Heart left ventricle (tissue), 16 donors: ENCODE measurements at regions of chr1 and their contacts with region 1.

Region 1: DNA sequence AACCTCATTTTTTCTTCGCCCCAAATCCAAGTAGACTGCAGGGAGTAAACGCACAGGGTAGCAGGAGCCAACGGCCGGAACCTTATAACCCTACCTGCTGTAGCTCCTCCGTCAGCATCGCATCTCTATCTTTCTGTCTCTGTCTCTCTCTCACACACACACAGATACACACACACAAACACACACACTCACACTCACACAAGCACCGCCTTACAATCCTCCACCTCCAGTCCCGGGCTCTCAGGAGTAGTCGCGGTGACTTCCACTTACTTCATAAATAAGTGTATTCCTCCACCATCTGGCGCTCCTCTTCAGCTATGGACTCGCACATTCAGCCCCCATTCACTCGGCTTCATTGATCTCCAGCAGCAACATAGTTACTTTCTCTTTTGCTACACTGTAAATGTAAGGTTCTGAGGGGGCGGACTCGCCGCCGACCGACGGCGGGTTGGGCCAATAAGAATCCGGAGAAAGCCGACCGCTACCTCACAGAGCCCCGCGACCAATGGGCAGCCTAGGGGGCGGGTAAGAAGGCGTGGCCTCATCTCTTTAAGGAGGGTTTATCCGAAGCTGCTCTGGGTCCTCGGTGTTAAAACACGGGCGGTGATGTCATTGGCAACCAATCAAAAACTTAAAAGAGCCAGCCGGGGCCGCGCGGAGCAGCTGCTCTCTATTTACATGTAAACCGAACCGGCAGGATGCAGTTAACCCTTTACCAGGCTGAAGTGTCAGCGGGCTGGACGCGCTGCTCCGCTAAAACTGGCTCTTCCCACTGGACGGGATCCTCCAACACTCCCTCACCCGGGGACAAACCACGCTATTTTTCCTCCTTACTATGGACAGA is at the start of gene DUSP10:
- DNase-seq: peak; percentile 98 to 99 (median 99)
- ATAC-seq: peak; percentile 95 to 98 (median 97)
- H3K4me3 ChIP-seq: peak within 1 kb of the TSS; percentile 49 to 90 (median 76)
- H3K27ac ChIP-seq: peak within 1 kb of the TSS; percentile 95 to 100 (median 98)
- H3K4me1 ChIP-seq: peaks cover 0 to 37% (median 9%) of the 10 kb centered on the region in 12 donors
- H3K27me3 ChIP-seq: no peaks in the 10 kb centered on the region
- CTCF ChIP-seq: no peak
- POLR2A ChIP-seq: peak in 1 of 2 donors; percentile 82
- total RNA-seq, gene DUSP10: 2.8 to 7.1 (median 4.4) TPM

Region 2: DNA sequence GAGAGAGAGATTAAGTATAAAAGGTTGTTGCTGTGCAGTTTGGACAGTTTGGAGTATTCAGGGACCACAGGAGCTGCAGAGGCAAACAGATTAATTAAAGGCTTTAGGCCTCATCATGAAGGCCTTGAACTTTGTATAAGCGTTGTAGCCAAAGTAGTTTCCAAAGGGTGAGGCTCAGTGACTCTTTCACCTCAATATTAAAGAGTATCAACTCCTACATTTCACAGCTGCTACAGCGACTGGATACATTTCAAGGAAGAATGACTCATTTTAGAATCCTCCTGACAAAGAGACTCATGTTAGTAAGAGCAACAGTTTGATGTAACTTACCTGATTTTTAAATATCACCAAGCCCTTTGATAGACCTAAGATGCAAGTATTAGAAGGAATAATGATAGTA is 507.1 kb before region 1 on chr1:
- intact Hi-C with region 1: no loop called
- DNase-seq: no peak
- ATAC-seq: no peak
- H3K4me3 ChIP-seq: no peak overlapping the region
- H3K27ac ChIP-seq: peak overlapping the region in 1 of 12 donors; percentile 27
- H3K4me1 ChIP-seq: peaks cover 0 to 16% (median 4%) of the 10 kb centered on the region in 12 donors
- H3K27me3 ChIP-seq: no peaks in the 10 kb centered on the region
- CTCF ChIP-seq: no peak
- POLR2A ChIP-seq: no peak

Region 3: GRCh38 chr1:221478050-221478949 is 263.6 kb before region 1 on chr1:
- intact Hi-C with region 1: loop called in 1 of 10 experiments (anchors 5 kb)
- DNase-seq: peak; percentile 21 to 61 (median 52)
- ATAC-seq: peak in 3 of 4 donors; percentile 72 to 93 (median 88)
- H3K4me3 ChIP-seq: no peak overlapping the region
- H3K27ac ChIP-seq: no peak overlapping the region
- H3K4me1 ChIP-seq: no peaks in the 10 kb centered on the region
- H3K27me3 ChIP-seq: peaks cover 0 to 13% (median 0%) of the 10 kb centered on the region in 9 donors
- CTCF ChIP-seq: peak in 11 of 12 donors; percentile 43 to 69 (median 55)
- POLR2A ChIP-seq: no peak

Region 4: DNA sequence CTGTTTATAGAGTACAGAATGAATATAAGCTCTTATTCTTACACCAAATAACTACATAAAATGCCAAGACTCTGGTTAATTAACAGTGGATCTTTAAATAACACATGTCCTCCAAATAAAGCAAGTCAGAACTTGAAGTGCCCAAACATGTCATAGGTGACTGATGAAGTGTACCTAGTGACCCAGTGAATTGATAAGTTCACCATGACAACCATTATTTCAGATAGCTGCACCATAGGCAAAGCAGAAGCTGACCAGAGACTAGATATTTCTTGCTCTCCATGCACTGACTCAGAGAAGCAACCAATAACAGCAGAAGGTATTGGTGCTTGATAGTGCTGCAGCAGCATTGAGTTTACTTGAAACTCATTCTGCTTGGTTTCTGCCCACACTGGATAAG is 192.1 kb before region 1 on chr1:
- intact Hi-C with region 1: loop called in 3 of 10 experiments (anchors 5 to 10 kb)
- DNase-seq: no peak
- ATAC-seq: no peak
- H3K4me3 ChIP-seq: no peak overlapping the region
- H3K27ac ChIP-seq: no peak overlapping the region
- H3K4me1 ChIP-seq: no peaks in the 10 kb centered on the region
- H3K27me3 ChIP-seq: no peaks in the 10 kb centered on the region
- CTCF ChIP-seq: no peak
- POLR2A ChIP-seq: no peak

Region 5: GRCh38 chr1:221567859-221568507 is 173.9 kb before region 1 on chr1:
- intact Hi-C with region 1: loop called in 1 of 10 experiments (anchors 10 kb)
- DNase-seq: no peak
- ATAC-seq: no peak
- H3K4me3 ChIP-seq: no peak overlapping the region
- H3K27ac ChIP-seq: no peak overlapping the region
- H3K4me1 ChIP-seq: peaks cover 0 to 27% (median under 1%) of the 10 kb centered on the region in 12 donors
- H3K27me3 ChIP-seq: no peaks in the 10 kb centered on the region
- CTCF ChIP-seq: no peak
- POLR2A ChIP-seq: no peak

Region 6: GRCh38 chr1:222009105-222009730 is 267.3 kb after region 1 on chr1:
- intact Hi-C with region 1: loop called in 2 of 10 experiments (anchors 10 kb)
- DNase-seq: no peak
- ATAC-seq: peak in 1 of 4 donors; percentile 57
- H3K4me3 ChIP-seq: no peak overlapping the region
- H3K27ac ChIP-seq: no peak overlapping the region
- H3K4me1 ChIP-seq: no peaks in the 10 kb centered on the region
- H3K27me3 ChIP-seq: no peaks in the 10 kb centered on the region
- CTCF ChIP-seq: peak in 10 of 12 donors; percentile 15 to 53 (median 40)
- POLR2A ChIP-seq: no peak

Region 7: DNA sequence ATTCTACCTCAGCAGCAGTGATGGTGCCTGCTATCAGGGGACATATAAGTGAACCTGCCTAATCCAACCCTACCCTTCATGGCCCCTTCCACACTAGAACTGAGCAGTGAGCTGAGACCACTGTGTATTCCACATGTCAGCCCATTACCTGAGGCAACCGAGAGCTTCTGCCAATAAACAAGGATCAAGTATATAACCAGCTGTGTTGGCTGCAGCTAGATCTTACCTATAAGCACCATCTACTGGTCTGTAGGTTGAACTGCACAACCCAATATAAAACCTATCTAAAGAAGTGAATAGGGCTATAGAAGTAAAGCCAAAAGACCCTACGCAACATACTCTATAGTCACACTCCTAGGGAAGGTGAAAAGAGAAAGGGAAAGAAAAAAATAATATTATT is 429.1 kb after region 1 on chr1:
- intact Hi-C with region 1: loop called in 4 of 10 experiments (anchors 2 to 10 kb)
- DNase-seq: no peak
- ATAC-seq: peak in 3 of 4 donors; percentile 28 to 75 (median 67)
- H3K4me3 ChIP-seq: no peak overlapping the region
- H3K27ac ChIP-seq: no peak overlapping the region
- H3K4me1 ChIP-seq: no peaks in the 10 kb centered on the region
- H3K27me3 ChIP-seq: no peaks in the 10 kb centered on the region
- CTCF ChIP-seq: peak; percentile 29 to 58 (median 41)
- POLR2A ChIP-seq: no peak